Heart right ventricle (tissue), 16 donors: ENCODE measurements at regions of chr3 and their contacts with region 1.

Region 1: DNA sequence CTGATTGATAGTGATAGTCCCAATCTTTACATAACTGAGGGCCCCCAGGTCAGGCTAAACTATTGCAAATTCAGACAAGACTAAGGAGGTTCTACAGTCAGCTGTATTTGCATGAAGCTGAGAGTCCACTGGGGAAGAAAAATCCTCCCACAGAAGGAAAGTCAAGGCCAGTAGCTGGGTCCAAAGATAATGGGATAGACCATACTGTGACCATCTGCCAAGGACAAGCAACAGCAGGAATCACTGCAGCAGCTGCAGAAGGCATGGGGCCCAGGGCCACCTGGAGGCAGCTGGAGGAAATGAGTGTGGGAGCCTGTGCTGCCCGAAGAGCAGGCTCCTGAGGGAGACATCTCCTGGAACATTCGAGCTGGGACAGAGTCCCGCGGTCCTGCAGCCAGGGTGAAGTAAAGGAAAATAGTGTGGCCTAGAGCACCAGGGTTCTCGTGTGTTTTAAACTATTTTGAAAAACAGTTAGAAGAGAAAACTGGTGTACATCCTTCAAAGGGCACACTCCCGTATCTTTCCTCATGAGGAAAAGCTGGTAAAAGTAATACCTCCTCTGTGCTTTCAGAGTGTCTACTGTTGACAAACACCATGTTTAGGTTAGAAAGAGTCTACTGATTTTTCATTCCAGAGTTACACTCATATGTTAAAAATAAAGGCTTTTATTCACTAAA is 13.2 kb upstream of the TMEM212 start:
- DNase-seq: peak; percentile 81 to 87
- ATAC-seq: peak; percentile 86 to 95 (median 93)
- H3K4me3 ChIP-seq: no peak overlapping the region
- H3K27ac ChIP-seq: peak overlapping the region; percentile 28 to 81 (median 60)
- H3K4me1 ChIP-seq: peaks cover 3 to 65% (median 40%) of the 10 kb centered on the region in 9 donors
- H3K27me3 ChIP-seq: no peaks in the 10 kb centered on the region
- CTCF ChIP-seq: peak; percentile 44 to 81 (median 70)

Region 2: GRCh38 chr3:171646357-171647133 is 183.4 kb before region 1 on chr3:
- intact Hi-C with region 1: loop called in 6 of 10 experiments (anchors 2 to 10 kb)
- DNase-seq: peak in 1 of 2 donors; percentile 57
- ATAC-seq: peak; percentile 57 to 88 (median 80)
- H3K4me3 ChIP-seq: no peak overlapping the region
- H3K27ac ChIP-seq: peak overlapping the region in 9 of 10 donors; percentile 37 to 82 (median 66)
- H3K4me1 ChIP-seq: peaks cover 0 to 65% (median 29%) of the 10 kb centered on the region in 9 donors
- H3K27me3 ChIP-seq: no peaks in the 10 kb centered on the region
- CTCF ChIP-seq: peak; percentile 40 to 76 (median 65)

Region 3: GRCh38 chr3:171718493-171719175 is 111.3 kb before region 1 on chr3:
- intact Hi-C with region 1: no loop called
- DNase-seq: no peak
- ATAC-seq: no peak
- H3K4me3 ChIP-seq: no peak overlapping the region
- H3K27ac ChIP-seq: no peak overlapping the region
- H3K4me1 ChIP-seq: no peaks in the 10 kb centered on the region
- H3K27me3 ChIP-seq: no peaks in the 10 kb centered on the region
- CTCF ChIP-seq: no peak

Region 4: GRCh38 chr3:171772427-171773056 is 57.4 kb before region 1 on chr3:
- intact Hi-C with region 1: loop called in 1 of 10 experiments (anchors 10 kb)
- DNase-seq: peak; percentile 22 to 68
- ATAC-seq: peak in 4 of 8 donors; percentile 27 to 54 (median 44)
- H3K4me3 ChIP-seq: no peak overlapping the region
- H3K27ac ChIP-seq: peak overlapping the region in 2 of 10 donors; percentile 80 to 83
- H3K4me1 ChIP-seq: peaks cover 0 to 50% (median 23%) of the 10 kb centered on the region in 9 donors
- H3K27me3 ChIP-seq: no peaks in the 10 kb centered on the region
- CTCF ChIP-seq: peak; percentile 28 to 79 (median 73)

Region 5: DNA sequence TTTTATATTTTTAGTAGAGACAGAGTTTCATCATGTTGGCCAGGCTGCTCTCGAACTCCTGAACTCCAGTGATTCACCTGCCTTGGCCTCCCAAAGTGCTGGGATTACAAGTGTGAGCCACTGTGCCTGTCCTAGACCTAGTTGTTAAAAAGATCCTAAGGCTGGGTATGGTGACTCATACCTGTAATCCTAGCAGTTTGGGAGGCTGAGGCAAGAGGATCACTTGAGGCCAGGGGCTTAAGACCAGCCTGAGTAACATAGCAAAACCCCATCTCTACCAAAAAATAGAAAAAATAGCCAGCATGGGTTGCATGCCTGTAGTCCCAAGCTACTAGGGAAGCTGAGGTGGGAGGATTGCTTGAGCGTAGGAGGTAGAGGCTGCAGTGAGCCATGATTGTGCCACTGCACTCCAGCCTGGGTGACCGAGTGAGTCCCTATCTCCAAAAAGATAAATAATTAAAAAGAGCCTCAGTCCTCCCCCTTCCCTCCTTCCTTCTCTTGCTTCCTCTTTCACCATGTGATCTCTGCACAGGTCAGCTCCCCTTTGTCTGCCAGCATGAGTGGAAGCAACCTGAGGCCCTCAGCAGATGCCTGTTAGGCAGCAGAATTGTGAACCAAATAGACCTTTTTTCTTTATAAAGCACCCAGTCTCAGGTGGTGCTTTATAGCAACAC is 199.6 kb after region 1 on chr3:
- intact Hi-C with region 1: loop called in 2 of 10 experiments (anchors 10 kb)
- DNase-seq: no peak
- ATAC-seq: no peak
- H3K4me3 ChIP-seq: no peak overlapping the region
- H3K27ac ChIP-seq: no peak overlapping the region
- H3K4me1 ChIP-seq: peaks cover 0 to 7% (median 0%) of the 10 kb centered on the region in 9 donors
- H3K27me3 ChIP-seq: no peaks in the 10 kb centered on the region
- CTCF ChIP-seq: no peak

Region 6: DNA sequence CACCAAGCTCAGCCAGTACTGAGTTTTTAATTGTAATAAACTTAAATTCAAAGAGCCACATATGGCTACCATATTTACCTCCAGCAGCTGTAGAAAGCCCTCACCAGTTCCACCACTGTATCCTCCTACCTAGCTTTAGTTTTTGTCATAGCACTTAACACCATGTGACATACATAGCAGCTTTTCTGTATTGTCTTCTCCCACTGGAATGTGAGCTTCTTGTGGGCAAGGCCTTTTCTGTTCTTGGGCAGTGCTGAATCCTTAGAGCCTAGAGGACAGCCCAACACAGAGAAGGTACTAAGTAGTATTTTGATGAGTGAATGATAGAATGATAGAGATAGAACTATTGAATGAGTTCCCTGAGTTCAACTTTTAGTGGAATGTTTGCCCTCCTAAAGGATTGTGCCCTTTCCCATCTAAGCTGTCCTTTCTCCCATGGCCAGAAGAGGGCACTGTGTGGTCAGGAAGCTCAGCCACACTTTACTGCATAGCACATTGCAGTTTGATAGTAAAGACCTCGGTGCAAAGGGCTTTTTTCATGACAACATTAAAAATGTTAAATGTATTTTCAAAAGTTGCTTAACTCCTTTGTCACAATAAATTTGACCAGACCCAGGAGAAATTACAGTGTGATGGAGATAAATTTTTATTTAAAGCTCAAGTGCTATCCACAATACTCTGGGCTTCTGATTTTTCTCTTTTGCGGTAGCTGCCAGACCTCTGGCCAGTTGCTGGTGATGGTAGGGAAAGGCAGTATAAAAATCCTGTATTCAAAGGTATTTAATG is 502.5 kb after region 1 on chr3:
- intact Hi-C with region 1: loop called in 3 of 10 experiments (anchors 5 to 10 kb)
- DNase-seq: peak in 1 of 2 donors; percentile 75
- ATAC-seq: peak; percentile 80 to 91 (median 88)
- H3K4me3 ChIP-seq: no peak overlapping the region
- H3K27ac ChIP-seq: peak overlapping the region in 6 of 10 donors; percentile 22 to 62 (median 40)
- H3K4me1 ChIP-seq: peaks cover 0 to 17% (median 6%) of the 10 kb centered on the region in 9 donors
- H3K27me3 ChIP-seq: no peaks in the 10 kb centered on the region
- CTCF ChIP-seq: peak; percentile 69 to 95 (median 91)